ENCODE measurements at regions of chr7 and their contacts with region 1.

Region 1: DNA sequence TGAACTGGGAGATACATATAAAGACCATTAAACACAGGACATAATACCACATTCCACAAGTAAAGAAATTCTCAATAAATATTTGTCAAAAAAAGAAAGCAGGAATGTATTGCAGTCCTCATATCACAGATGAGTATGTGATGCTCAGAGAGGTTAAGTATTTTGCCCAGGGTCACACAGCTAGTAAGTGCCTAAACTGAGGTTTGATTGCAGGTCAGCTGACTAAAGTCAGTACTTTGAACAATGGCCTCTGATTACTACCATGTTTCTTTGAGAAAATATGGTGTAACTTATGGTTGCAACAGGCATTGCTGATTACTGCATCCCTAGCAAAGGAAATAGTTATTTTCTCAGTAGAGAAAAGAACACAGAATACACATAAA is 267.1 kb downstream of the ELMO1 start:
- DNase-seq: no peak
- H3K4me3 ChIP-seq: no peak overlapping the region
- H3K27ac ChIP-seq: no peak overlapping the region
- H3K27me3 ChIP-seq: no peaks in the 10 kb centered on the region
- CTCF ChIP-seq: no peak

Region 2: DNA sequence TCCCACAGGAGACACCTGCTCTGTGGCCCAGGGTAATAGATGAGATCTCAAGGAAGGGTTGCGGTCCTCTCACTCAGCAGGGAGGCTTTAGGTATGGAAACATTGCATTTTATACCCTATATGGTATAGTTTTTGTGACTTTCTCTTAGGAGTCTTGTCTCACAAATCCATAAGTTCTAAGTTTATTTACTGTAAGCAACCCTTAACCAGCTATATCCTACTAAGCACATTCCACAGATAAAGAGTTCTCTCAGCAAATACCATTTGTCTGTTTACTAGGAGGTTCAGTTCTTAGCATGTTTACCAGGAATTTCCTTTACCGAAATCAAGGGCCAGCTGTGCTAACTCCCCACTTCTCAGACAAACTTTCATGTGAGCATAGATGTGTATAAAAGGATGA is 725.0 kb before region 1 on chr7:
- CTCF ChIA-PET with region 1: interaction called, 10 read pairs
- POLR2A ChIA-PET with region 1: no interaction called
- DNase-seq: no peak
- H3K4me3 ChIP-seq: no peak overlapping the region
- H3K27ac ChIP-seq: no peak overlapping the region
- H3K27me3 ChIP-seq: no peaks in the 10 kb centered on the region
- CTCF ChIP-seq: no peak

Region 3: GRCh38 chr7:36958111-36958733 is 223.3 kb before region 1 on chr7:
- CTCF ChIA-PET with region 1: interaction called, 29 read pairs
- POLR2A ChIA-PET with region 1: no interaction called
- DNase-seq: no peak
- H3K4me3 ChIP-seq: no peak overlapping the region
- H3K27ac ChIP-seq: no peak overlapping the region
- H3K27me3 ChIP-seq: no peaks in the 10 kb centered on the region
- CTCF ChIP-seq: no peak

Region 4: GRCh38 chr7:36979810-36980248 is 201.7 kb before region 1 on chr7:
- CTCF ChIA-PET with region 1: interaction called, 247 read pairs
- POLR2A ChIA-PET with region 1: no interaction called
- DNase-seq: no peak
- H3K4me3 ChIP-seq: no peak overlapping the region
- H3K27ac ChIP-seq: no peak overlapping the region
- H3K27me3 ChIP-seq: no peaks in the 10 kb centered on the region
- CTCF ChIP-seq: no peak

Region 5: DNA sequence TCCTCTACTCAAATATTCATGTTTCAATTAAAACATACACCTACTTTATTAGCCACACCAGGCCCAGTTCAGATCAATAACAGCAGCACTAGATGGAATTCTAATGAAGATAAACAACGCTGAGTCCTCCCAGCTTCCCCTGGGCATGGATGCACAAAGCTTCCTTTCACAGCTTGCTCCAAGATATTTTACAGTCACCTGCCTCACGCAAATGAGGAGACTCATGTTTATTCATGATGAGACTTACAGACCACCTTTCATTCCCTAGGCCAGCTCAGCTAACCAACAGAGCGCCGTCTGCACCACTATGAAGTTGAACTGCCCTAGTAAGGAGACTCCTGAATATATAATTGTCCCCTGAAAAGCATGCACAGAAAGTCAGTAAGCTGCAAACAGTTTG is 174.3 kb before region 1 on chr7:
- CTCF ChIA-PET with region 1: interaction called, 26 read pairs
- POLR2A ChIA-PET with region 1: no interaction called
- DNase-seq: no peak
- H3K4me3 ChIP-seq: no peak overlapping the region
- H3K27ac ChIP-seq: no peak overlapping the region
- H3K27me3 ChIP-seq: peaks cover 2% of the 10 kb centered on the region
- CTCF ChIP-seq: no peak

Region 6: DNA sequence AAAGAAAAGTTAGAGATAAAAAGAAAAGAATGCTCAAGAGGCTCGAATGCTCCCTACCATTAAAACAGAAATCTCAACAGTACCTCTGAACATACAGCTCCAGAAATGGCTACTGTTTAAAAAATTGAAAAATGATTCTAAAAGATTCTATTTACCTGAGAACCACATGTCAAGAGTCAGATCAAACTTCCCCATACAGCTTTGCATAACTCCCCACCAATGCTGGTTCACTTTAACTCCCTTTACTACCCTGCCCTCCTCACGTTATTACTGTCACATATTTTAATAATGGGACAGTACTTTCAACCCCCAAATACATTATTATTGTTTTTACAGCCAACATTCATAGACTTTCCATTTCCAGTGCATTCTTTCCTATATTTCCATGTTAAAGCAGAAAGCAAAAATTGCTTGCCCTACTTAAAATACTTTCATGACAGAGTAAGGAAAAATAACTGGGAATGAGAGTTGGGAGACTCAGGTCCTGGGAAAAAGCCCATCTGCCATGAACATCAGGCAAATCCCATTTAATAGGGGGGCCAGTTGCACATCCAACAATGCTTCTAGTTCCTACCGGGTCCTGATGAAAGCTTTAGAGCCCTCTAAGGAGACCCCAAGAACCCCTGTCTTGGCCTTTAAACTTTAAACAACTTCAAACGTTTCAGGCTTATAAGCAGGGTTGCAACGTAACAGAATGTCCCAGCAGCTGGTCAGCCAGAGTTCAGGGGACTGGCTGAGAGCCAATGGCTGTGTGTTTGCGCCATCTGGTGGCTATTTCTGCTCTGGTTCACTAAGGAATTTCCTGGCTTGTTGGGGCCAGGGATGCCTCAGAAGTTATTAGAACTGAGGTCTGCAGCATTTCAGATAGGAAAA is 19.7 kb after region 1 on chr7:
- CTCF ChIA-PET with region 1: interaction called, 26 read pairs
- POLR2A ChIA-PET with region 1: no interaction called
- DNase-seq: peak; percentile 30
- H3K4me3 ChIP-seq: no peak overlapping the region
- H3K27ac ChIP-seq: no peak overlapping the region
- H3K27me3 ChIP-seq: peaks cover 2% of the 10 kb centered on the region
- CTCF ChIP-seq: peak; percentile 82

Region 7: DNA sequence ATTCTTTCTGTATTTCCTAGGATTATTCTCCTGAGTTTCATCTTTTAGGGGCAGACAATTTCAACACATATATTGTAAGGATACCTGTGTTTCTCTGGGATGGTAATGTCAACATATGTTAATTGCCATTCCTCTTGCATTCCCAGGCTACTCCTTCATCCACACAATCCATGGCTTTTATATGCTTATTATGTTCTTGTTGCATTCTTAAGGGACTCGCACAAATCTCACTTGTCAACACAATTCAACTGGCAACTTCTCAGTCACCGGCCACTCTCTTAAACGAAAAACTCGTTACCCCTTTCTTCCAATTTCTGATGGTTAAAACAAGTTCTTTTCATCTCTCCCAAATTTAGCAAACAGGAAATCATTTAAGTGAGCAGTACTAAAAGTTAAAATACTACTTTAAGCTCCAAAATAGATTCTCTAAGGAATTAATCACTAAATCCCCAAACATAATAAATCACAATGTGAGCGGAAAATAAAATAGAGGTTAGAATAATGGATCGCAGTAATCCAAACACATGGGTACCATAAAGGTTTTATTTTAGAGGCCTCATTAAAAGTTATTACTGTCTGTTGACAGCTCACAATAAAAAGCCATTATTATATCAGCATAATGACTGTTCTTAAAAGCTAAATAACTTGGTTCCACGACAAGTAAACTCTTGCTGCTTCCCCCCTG is 43.9 kb after region 1 on chr7:
- CTCF ChIA-PET with region 1: no interaction called
- POLR2A ChIA-PET with region 1: no interaction called
- DNase-seq: no peak
- H3K4me3 ChIP-seq: no peak overlapping the region
- H3K27ac ChIP-seq: no peak overlapping the region
- H3K27me3 ChIP-seq: no peaks in the 10 kb centered on the region
- CTCF ChIP-seq: no peak

Measured in AG04450 (cell line).